HEK293T (cell line): ENCODE measurements at regions of chr3 and their contacts with region 1.

Region 1: GRCh38 chr3:49955636-49956035 is 15.7 kb downstream of the RBM6 start:
- DNase-seq: no peak

Region 2: DNA sequence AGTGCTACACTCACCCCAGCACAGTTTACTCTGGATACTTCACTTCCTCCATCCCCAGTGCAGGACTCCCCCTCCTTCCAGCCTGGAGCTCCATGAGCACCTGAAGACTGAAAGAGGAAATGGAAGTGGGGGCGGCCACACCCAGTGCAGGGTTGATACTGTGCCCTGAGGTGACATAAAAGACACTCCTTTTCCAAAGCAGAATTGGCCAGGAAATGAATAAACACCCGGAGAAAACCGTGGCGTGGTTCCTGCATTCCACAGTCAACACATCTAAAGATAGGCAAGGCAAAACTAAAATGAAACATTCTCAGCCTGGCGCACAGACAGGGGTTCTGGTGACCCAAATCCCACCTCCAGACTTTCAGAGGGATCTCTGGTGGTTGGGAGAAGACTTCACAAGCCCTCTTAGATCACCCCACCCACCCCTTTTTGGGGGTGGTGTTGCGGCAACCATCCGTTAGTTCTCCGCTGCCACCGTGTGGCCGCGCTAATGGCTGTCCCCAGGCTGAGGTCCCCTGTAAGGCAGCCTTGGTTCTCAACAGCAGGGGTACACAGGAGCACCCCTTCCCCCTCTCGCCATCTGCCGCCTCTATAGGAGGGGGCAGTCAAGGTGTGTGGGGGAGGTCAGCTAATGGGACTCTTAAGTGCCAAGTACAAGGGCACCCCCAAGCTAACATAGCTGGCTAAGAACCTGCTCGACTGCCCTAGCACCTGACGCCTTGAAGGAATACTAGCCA is 49.5 kb before region 1 on chr3:
- CTCF ChIA-PET with region 1: no interaction called
- POLR2A ChIA-PET with region 1: no interaction called
- DNase-seq: peak; percentile 56

Region 3: DNA sequence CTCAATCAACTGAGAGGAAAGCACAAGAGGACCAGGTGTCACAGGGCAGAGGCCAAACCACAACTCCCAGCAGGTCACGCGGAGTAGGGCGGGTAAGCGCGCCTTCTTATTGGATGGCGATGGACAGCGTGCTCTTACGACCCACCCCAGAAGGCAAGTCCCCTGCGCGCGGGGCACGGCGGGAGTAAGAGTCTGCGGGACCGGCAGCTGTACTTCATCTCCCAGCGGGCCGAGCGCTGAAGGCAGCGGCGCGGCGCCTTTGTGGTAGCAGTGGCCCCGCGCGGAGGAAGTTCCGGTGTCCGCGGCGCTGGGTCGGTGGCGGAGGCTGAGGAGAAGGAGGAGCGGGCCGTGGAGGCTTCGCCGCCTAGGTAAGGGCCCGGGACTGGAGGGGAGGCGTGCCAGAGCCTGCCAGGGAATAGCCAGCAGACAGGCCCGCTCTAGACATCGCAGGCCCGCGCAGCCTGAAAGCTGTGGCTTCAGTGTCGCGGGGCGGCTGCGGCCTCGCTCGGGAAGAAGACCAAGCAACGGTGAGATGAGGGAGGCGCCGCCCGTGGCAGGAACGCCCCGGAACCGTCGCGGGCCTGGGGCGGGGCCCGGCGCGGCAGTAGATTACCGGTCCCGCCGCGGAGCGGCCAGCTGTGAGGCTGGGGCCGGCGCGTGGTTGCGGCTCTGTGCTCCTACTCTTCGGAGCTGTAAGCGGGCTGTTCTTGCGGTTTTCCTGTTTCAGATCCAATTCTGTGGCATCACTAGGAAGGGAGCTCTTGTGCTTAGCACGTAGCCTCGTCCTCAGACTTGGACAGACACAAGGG is 15.6 kb before region 1 on chr3 and contains the start of gene RBM6:
- CTCF ChIA-PET with region 1: no interaction called
- POLR2A ChIA-PET with region 1: interaction called, 20 read pairs
- DNase-seq: peak; percentile 96

Region 4: GRCh38 chr3:50112462-50112861 is 156.8 kb after region 1 on chr3:
- CTCF ChIA-PET with region 1: no interaction called
- POLR2A ChIA-PET with region 1: no interaction called
- DNase-seq: no peak